Common myeloid progenitor, CD34-positive (primary cell): ENCODE measurements at regions of chr6 and their contacts with region 1.

Region 1: GRCh38 chr6:12957321-12958051 is 240.9 kb downstream of the PHACTR1 start:
- DNase-seq: peak; percentile 70 to 88 (median 80)
- H3K4me3 ChIP-seq: peak overlapping the region; percentile 71 to 98 (median 90)
- H3K27ac ChIP-seq: peak overlapping the region; percentile 78 to 87
- H3K4me1 ChIP-seq: peaks cover 3 to 56% (median 31%) of the 10 kb centered on the region in 4 experiments
- H3K27me3 ChIP-seq: no peaks in the 10 kb centered on the region

Region 2: DNA sequence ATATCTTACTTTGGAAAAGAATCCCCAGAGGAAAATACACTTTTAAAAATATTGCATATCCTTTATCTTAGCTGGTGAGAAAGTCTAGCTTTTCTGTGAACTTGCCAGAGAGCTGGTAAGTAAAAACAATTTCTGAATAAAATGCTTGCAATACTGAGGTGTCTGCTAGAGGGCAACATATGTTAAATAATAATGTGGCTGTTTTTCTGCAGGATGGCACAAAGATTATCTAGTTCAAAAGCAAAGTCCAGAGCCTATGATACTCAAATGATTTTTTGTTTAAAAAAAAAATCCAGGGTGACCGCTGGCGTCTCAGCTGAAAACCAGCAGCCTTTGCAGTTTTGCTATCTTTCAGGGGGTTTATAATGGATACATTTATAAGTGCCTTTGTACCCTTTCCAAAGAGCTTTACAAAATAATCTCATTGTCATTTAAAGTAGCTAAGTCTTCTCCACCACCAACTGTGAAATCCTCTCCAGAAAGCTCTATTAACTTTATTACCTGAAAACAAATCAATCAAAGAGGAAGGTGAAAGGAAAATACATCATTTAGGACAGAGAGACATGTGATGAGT is 46.0 kb before region 1 on chr6:
- CTCF ChIA-PET with region 1: interaction called, 15 read pairs
- POLR2A ChIA-PET with region 1: no interaction called
- DNase-seq: peak; percentile 51 to 74 (median 70)
- H3K4me3 ChIP-seq: no peak overlapping the region
- H3K27ac ChIP-seq: no peak overlapping the region
- H3K4me1 ChIP-seq: peaks cover 3 to 28% (median 7%) of the 10 kb centered on the region in 4 experiments
- H3K27me3 ChIP-seq: no peaks in the 10 kb centered on the region

Region 3: DNA sequence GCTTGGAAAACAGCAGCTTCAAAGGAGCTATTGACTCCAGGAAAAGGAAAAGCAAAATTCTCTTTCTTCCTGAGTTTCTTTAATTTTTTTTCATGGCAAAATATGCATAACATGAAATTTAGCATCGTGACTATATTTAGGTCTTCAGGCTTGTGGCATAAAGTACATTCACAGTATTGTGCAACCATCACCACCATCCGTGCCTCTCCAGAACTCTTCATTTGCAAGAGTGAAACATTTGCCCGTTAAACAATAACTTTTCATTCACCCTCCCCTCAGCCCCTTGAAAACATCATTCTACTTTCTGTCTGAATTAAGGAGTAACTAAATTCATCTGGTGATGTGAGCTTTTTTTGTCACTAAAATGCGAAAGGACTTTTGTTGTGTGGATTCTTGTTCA is 10.8 kb after region 1 on chr6:
- CTCF ChIA-PET with region 1: interaction called, 16 read pairs
- POLR2A ChIA-PET with region 1: interaction called, 5 read pairs
- DNase-seq: peak in 2 of 3 donors; percentile 37 to 46
- H3K4me3 ChIP-seq: peak overlapping the region in 2 of 7 experiments; percentile 25 to 56
- H3K27ac ChIP-seq: no peak overlapping the region
- H3K4me1 ChIP-seq: peaks cover 5 to 65% (median 37%) of the 10 kb centered on the region in 4 experiments
- H3K27me3 ChIP-seq: no peaks in the 10 kb centered on the region

Region 4: GRCh38 chr6:13120483-13121482 is 163.3 kb after region 1 on chr6:
- CTCF ChIA-PET with region 1: interaction called, 16 read pairs
- POLR2A ChIA-PET with region 1: no interaction called
- DNase-seq: peak; percentile 68 to 86 (median 83)
- H3K4me3 ChIP-seq: no peak overlapping the region
- H3K27ac ChIP-seq: no peak overlapping the region
- H3K4me1 ChIP-seq: peaks cover 0 to 33% (median 23%) of the 10 kb centered on the region in 4 experiments
- H3K27me3 ChIP-seq: no peaks in the 10 kb centered on the region

Region 5: GRCh38 chr6:13273931-13274706 is 316.6 kb after region 1 on chr6:
- CTCF ChIA-PET with region 1: interaction called, 13 read pairs
- POLR2A ChIA-PET with region 1: no interaction called
- DNase-seq: peak; percentile 85 to 96 (median 94)
- H3K4me3 ChIP-seq: peak overlapping the region in 6 of 7 experiments; percentile 71 to 94 (median 80)
- H3K27ac ChIP-seq: peak overlapping the region; percentile 92 to 95
- H3K4me1 ChIP-seq: peaks cover 16 to 75% (median 57%) of the 10 kb centered on the region in 4 experiments
- H3K27me3 ChIP-seq: no peaks in the 10 kb centered on the region